A549 (cell line): ENCODE measurements at regions of chr2 and their contacts with region 1.

Region 1: DNA sequence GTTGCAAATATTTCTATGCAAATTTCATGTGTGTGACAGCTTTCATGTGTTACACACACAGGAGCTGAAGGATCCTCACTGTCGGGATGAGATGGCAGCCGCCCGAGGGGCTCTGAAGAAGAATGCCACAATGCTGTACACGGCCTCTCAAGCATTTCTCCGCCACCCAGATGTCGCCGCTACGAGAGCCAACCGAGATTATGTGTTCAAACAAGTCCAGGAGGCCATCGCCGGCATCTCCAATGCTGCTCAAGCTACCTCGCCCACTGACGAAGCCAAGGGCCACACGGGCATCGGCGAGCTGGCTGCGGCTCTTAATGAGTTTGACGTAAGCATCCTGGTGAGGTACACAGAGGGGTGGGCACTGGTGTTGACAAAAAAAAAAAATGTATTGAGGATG is 361.2 kb downstream of the CTNNA2 start:
- DNase-seq: no peak
- ATAC-seq: no peak
- H3K4me3 ChIP-seq: no peak overlapping the region
- H3K27ac ChIP-seq: no peak overlapping the region
- H3K4me1 ChIP-seq: no peaks in the 10 kb centered on the region
- CTCF ChIP-seq: no peak
- EP300 ChIP-seq: no peak
- POLR2A ChIP-seq: no peak
- RAD21 ChIP-seq: no peak

Region 2: GRCh38 chr2:79887747-79888374 is 13.8 kb after region 1 on chr2:
- CTCF ChIA-PET with region 1: interaction called, 16 read pairs
- POLR2A ChIA-PET with region 1: no interaction called
- DNase-seq: peak; percentile 8 to 71
- ATAC-seq: peak; percentile 81 to 87
- H3K4me3 ChIP-seq: no peak overlapping the region
- H3K27ac ChIP-seq: no peak overlapping the region
- H3K4me1 ChIP-seq: no peaks in the 10 kb centered on the region
- CTCF ChIP-seq: peak; percentile 83
- EP300 ChIP-seq: no peak
- POLR2A ChIP-seq: no peak
- RAD21 ChIP-seq: peak; percentile 93 to 95

Region 3: DNA sequence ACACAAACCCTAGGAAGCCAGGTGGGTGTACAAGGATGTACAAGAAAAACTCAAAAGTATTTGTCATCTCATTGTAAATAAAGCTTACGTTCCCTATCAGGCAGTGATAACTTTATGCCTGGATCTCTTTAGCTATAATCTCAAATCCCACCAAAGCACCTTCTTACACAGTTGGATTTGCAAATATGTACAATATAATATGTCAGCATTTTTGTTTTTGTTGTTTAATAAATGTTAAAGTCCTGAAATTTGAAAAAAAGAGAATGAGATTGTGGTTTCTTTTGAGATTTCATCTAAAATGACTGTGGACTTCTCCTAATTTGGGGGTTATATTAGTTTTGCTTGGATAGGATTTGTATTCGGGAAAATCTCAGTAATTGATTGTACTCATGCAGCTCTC is 348.6 kb after region 1 on chr2:
- CTCF ChIA-PET with region 1: no interaction called
- POLR2A ChIA-PET with region 1: no interaction called
- DNase-seq: no peak
- ATAC-seq: no peak
- H3K4me3 ChIP-seq: no peak overlapping the region
- H3K27ac ChIP-seq: no peak overlapping the region
- H3K4me1 ChIP-seq: no peaks in the 10 kb centered on the region
- CTCF ChIP-seq: no peak
- EP300 ChIP-seq: no peak
- POLR2A ChIP-seq: no peak
- RAD21 ChIP-seq: no peak